ENCODE measurements at regions of chr6 and their contacts with region 1.

Region 1: GRCh38 chr6:169751242-169752073 is at the starts of genes DYNLT2 and ERMARD:
- DNase-seq: peak; percentile 96 to 97
- ATAC-seq: peak; percentile 99
- H3K4me3 ChIP-seq: peak within 1 kb of the TSS; percentile 69
- H3K27ac ChIP-seq: peak within 1 kb of the TSS; percentile 89
- H3K4me1 ChIP-seq: peaks cover 26% of the 10 kb centered on the region
- H3K27me3 ChIP-seq: no peaks in the 10 kb centered on the region
- CTCF ChIP-seq: peak; percentile 25
- total RNA-seq, gene DYNLT2: 0.73 to 1.3 (median 0.90) TPM
- total RNA-seq, gene ERMARD: 9.4 to 11.8 (median 11.2) TPM

Region 2: DNA sequence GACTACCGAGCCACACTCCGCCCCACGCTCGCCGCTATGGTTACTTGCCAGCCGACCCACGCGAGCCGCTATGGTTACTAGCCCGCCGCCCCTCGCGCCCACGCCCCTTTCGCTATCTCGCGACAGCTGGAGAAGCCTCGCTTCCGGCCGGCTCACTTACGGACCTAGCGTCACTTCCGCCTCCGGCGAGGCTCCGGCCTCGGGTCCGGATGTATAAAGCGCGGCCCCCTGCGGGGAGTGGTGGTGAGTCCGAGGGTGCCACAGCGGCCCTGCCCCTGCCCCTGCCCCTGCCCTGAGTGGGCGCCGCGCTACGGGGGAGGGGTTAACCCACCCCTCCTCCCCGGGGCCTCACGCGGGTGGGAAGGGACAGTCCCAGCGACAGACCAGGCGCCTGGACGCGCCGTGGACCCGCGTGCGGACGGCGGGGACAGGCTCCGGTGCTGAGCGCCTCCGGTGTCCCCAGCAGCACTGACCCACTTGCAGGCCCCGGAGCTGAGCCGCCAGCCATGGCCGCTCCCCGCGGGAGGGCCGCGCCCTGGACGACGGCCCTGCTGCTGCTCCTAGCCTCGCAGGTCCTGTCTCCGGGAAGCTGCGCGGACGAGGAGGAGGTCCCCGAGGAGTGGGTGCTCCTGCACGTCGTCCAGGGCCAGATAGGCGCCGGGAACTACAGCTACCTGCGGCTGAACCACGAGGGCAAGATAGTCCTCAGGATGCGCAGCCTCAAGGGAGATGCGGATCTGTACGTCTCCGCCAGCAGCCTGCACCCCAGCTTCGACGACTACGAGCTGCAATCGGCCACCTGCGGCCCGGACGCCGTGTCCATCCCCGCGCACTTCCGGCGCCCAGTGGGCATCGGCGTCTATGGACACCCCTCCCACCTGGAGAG is 49.3 kb before region 1 on chr6 and contains the starts of genes C6orf120 and WDR27:
- intact Hi-C with region 1: loop called in 1 of 2 experiments (anchors 5 kb)
- DNase-seq: peak; percentile 98 to 99
- ATAC-seq: peak; percentile 96 to 97 (median 96)
- H3K4me3 ChIP-seq: peak within 1 kb of the TSS; percentile 90
- H3K27ac ChIP-seq: peak within 1 kb of the TSS; percentile 99
- H3K4me1 ChIP-seq: peaks cover 37% of the 10 kb centered on the region
- H3K27me3 ChIP-seq: no peaks in the 10 kb centered on the region
- CTCF ChIP-seq: no peak
- total RNA-seq, gene C6orf120: 16.5 to 23.6 (median 20.0) TPM
- total RNA-seq, gene WDR27: 4.7 to 14.4 (median 5.8) TPM

Region 3: DNA sequence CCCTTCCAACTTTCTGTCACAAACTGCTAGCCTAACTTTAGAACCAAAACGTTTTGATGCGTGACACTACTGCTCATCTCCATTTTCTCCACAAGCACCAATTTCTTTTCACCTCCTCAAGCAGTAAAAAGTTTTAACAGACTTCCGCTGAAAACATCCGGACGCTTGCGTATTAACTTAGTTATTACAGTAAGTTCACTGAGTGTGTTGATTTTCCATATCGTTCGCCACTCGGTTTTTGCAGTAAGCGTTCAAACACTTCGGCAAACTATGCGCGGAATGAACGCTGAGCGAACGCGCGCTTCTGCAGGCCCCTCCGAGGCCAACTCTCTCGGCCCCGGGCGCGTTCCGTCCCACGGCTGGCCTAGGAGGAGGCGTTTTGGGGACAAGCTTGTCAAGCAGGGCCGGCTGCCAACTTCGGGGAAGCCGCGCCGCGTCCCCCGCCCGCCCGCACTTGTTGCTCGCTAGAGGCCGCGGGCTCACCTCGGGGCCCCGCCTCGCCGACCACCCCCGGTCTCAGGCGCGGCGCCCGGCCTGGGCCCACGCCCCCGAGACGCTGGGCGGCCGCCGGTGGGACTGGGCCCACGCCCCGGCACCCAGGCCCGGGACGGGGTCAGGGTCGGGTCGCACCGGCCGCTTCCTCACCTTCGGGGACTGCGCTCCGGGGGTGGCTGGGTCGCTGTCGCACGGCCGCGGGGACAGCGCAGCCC is 28.1 kb before region 1 on chr6:
- intact Hi-C with region 1: loop called in 1 of 2 experiments (anchors 1 kb)
- DNase-seq: peak; percentile 87 to 91
- ATAC-seq: peak; percentile 75 to 83 (median 76)
- H3K4me3 ChIP-seq: peak overlapping the region; percentile 74
- H3K27ac ChIP-seq: peak overlapping the region; percentile 86
- H3K4me1 ChIP-seq: peaks cover 31% of the 10 kb centered on the region
- H3K27me3 ChIP-seq: no peaks in the 10 kb centered on the region
- CTCF ChIP-seq: peak; percentile 1

Region 4: DNA sequence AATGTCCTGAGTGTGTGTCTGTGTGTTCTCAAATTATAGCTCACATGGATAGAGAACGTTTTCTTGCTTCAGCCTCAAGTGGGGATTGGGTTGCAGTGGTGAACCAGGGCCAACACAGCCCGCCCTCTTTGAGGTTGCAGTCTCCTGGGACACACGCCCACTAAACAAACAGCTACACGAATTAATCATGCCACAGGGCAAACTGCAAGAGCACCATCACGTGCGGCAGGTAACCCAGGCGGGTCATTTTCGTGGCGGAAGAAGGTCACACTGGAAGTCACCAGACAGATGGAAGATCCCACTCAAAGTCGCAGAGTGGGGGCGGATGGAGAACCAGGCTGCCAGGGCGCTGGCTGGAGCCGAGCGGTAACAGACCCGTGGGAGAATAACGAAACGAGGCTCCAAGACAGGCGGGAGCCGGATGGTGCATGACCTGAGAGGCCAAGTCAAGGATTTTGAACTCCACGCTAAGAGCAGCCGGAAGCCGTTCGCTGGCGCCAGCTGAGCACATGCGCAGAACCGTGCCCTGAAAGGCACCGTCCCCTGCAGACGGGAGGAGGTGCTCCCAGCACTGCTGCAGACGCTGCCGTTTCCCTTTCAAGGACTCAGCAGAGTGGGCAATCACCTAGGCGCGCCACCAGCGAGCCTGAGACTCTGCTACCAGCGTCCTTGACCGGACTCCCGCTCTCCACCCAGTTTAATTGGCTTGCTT is 528.7 kb after region 1 on chr6:
- intact Hi-C with region 1: no loop called
- DNase-seq: peak; percentile 76 to 89
- ATAC-seq: peak; percentile 83 to 89 (median 87)
- H3K4me3 ChIP-seq: peak overlapping the region; percentile 61
- H3K27ac ChIP-seq: peak overlapping the region; percentile 82
- H3K4me1 ChIP-seq: peaks cover 23% of the 10 kb centered on the region
- H3K27me3 ChIP-seq: peaks cover 0 to under 1% (median 0%) of the 10 kb centered on the region in 3 donors
- CTCF ChIP-seq: no peak

Region 5: DNA sequence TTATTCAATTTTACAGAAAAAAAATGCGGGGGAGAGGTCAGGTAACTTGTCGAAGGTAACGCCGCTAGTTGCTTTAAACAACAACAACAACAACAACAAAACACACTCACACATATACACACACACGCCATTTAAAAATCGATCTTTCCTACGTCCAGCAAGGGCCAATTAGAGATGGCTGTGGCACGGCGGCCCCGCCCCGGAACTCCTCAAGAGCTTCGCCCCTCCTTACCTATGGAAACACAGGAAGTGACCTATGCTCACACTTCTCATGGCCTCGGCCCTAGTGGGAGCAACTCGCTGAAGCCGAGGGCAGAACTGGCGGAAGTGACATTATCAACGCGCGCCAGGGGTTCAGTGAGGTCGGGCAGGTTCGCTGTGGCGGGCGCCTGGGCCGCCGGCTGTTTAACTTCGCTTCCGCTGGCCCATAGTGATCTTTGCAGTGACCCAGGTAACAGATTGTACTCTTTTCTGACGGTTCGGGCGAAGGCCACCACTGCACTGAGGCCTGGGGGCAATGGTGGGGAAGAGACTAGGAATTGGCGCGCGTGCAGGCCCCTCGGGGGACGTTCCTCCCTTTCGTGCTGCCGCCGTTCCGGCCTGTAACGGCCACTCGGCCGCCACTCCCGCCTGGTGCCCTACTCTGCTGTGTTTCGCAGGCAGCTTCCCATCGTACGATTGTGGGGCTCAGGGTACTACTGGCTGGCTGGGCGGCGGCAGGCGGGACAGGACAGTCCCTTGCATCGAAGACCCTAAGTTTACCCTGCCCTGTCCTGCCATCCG is 802.7 kb after region 1 on chr6 and contains the start of gene TBP:
- intact Hi-C with region 1: loop called in 1 of 2 experiments (anchors 5 kb)
- DNase-seq: peak; percentile 97 to 99
- ATAC-seq: peak; percentile 91 to 96 (median 94)
- H3K4me3 ChIP-seq: peak within 1 kb of the TSS; percentile 74
- H3K27ac ChIP-seq: peak within 1 kb of the TSS; percentile 98
- H3K4me1 ChIP-seq: peaks cover 43% of the 10 kb centered on the region
- H3K27me3 ChIP-seq: no peaks in the 10 kb centered on the region
- CTCF ChIP-seq: no peak
- total RNA-seq, gene TBP: 6.9 to 12.0 (median 8.0) TPM